Panc1 (cell line): ENCODE measurements at regions of chr20 and their contacts with region 1.

Region 1: GRCh38 chr20:24992487-24993205 is at the start of gene APMAP:
- DNase-seq: no peak
- ATAC-seq: peak; percentile 96
- H3K4me3 ChIP-seq: peak within 1 kb of the TSS; percentile 82 to 87
- H3K27ac ChIP-seq: peak within 1 kb of the TSS; percentile 99
- H3K4me1 ChIP-seq: peaks cover 47% of the 10 kb centered on the region
- H3K27me3 ChIP-seq: no peaks in the 10 kb centered on the region
- CTCF ChIP-seq: no peak
- total RNA-seq, gene APMAP: 165 TPM

Region 2: DNA sequence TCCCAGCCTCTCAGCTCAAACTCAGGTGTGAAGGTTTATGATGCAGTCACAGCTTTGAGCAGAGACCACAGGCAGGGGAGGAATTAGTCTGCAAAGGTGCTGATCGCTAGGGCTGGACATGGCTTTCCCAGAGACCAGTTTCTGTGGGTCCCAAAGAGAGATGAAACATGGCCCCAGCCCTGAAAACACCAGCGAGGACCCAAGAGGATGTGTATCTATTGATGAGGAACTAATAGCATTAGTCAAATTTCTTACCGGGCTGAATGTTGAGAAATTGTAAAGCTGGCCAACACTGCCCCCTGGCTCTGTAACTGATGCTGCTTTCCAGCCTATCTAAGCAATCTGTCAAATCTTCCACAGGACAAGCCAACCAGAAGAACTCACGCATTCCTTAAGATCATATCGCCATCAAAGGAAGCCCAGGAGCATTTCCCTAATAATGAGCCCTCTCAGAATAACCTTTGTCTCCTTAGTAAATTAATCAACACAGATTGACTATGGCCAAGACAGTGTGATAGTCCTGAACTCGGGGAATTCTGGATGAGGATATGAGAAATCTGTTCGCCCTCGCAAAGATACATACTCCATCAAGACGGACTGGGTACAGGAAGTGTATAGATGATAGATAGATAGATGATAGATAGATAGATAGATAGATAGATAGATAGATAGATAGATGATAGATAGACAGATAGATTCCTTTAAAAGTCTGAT is 73.1 kb after region 1 on chr20:
- CTCF ChIA-PET with region 1: interaction called, 5 read pairs
- POLR2A ChIA-PET with region 1: no interaction called
- in situ Hi-C with region 1: no loop called
- intact Hi-C with region 1: loop called (anchors 1 kb)
- DNase-seq: peak; percentile 61
- ATAC-seq: peak; percentile 90
- H3K4me3 ChIP-seq: 0 out of 4 replicates have a peak overlapping the region, but pooled peaks of 1 of the 2 experiments have one; percentile 7
- H3K27ac ChIP-seq: peak overlapping the region; percentile 68
- H3K4me1 ChIP-seq: peaks cover 13% of the 10 kb centered on the region
- H3K27me3 ChIP-seq: no peaks in the 10 kb centered on the region
- CTCF ChIP-seq: peak; percentile 85

Region 3: GRCh38 chr20:25178563-25179438 is 186.2 kb after region 1 on chr20:
- CTCF ChIA-PET with region 1: interaction called, 11 read pairs
- POLR2A ChIA-PET with region 1: no interaction called
- in situ Hi-C with region 1: no loop called
- intact Hi-C with region 1: loop called (anchors 1 kb)
- DNase-seq: peak; percentile 90
- ATAC-seq: peak; percentile 93
- H3K4me3 ChIP-seq: peak overlapping the region in 1 of 2 experiments; percentile 29; a peak in 2 of 4 replicates
- H3K27ac ChIP-seq: peak overlapping the region; percentile 76
- H3K4me1 ChIP-seq: peaks cover 35% of the 10 kb centered on the region
- H3K27me3 ChIP-seq: no peaks in the 10 kb centered on the region
- CTCF ChIP-seq: peak; percentile 95

Region 4: GRCh38 chr20:25195014-25195961 is 202.6 kb after region 1 on chr20 and contains the start of gene ENTPD6:
- CTCF ChIA-PET with region 1: no interaction called
- POLR2A ChIA-PET with region 1: no interaction called
- in situ Hi-C with region 1: no loop called
- intact Hi-C with region 1: loop called (anchors 5 kb)
- DNase-seq: peak; percentile 24
- ATAC-seq: peak; percentile 90
- H3K4me3 ChIP-seq: peak within 1 kb of the TSS; percentile 77 to 85
- H3K27ac ChIP-seq: peak within 1 kb of the TSS; percentile 92
- H3K4me1 ChIP-seq: peaks cover 39% of the 10 kb centered on the region
- H3K27me3 ChIP-seq: no peaks in the 10 kb centered on the region
- CTCF ChIP-seq: peak; percentile 58
- total RNA-seq, gene ENTPD6: 108 TPM

Region 5: GRCh38 chr20:25294459-25295385 is 302.1 kb after region 1 on chr20:
- CTCF ChIA-PET with region 1: no interaction called
- POLR2A ChIA-PET with region 1: no interaction called
- in situ Hi-C with region 1: no loop called
- intact Hi-C with region 1: loop called (anchors 10 kb)
- DNase-seq: no peak
- ATAC-seq: peak; percentile 53
- H3K4me3 ChIP-seq: no peak overlapping the region
- H3K27ac ChIP-seq: peak overlapping the region; percentile 70
- H3K4me1 ChIP-seq: peaks cover 52% of the 10 kb centered on the region
- H3K27me3 ChIP-seq: no peaks in the 10 kb centered on the region
- CTCF ChIP-seq: peak; percentile 94

Region 6: DNA sequence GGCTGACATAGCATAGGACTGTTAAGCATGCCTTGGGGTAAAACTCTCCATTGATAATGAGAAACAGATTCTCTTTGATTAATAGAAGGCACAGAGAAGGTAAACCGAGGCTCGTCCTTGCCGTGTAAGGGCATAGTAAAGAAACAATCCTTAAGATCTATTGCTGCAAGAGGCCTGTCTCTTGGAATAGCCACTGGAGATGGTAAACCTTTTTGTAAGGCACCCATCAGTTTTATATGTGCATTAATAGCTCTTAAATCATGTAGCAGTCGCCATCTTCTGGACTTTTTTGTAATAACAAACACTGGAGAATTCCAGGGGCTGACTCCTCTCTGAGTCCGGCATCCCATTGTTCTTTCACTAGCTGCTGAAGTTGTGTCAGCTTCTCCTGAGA is 406.4 kb after region 1 on chr20:
- CTCF ChIA-PET with region 1: no interaction called
- POLR2A ChIA-PET with region 1: no interaction called
- in situ Hi-C with region 1: no loop called
- intact Hi-C with region 1: loop called (anchors 5 kb)
- DNase-seq: peak; percentile 67
- ATAC-seq: peak; percentile 94
- H3K4me3 ChIP-seq: no peak overlapping the region
- H3K27ac ChIP-seq: peak overlapping the region; percentile 89
- H3K4me1 ChIP-seq: peaks cover 38% of the 10 kb centered on the region
- H3K27me3 ChIP-seq: no peaks in the 10 kb centered on the region
- CTCF ChIP-seq: peak; percentile 82